Left cardiac atrium (tissue), 4 donors: ENCODE measurements at regions of chr15 and their contacts with region 1.

Region 1: GRCh38 chr15:78108299-78109084 is 16.1 kb downstream of the SH2D7 start:
- DNase-seq: peak; percentile 88
- ATAC-seq: peak; percentile 87 to 89

Region 2: DNA sequence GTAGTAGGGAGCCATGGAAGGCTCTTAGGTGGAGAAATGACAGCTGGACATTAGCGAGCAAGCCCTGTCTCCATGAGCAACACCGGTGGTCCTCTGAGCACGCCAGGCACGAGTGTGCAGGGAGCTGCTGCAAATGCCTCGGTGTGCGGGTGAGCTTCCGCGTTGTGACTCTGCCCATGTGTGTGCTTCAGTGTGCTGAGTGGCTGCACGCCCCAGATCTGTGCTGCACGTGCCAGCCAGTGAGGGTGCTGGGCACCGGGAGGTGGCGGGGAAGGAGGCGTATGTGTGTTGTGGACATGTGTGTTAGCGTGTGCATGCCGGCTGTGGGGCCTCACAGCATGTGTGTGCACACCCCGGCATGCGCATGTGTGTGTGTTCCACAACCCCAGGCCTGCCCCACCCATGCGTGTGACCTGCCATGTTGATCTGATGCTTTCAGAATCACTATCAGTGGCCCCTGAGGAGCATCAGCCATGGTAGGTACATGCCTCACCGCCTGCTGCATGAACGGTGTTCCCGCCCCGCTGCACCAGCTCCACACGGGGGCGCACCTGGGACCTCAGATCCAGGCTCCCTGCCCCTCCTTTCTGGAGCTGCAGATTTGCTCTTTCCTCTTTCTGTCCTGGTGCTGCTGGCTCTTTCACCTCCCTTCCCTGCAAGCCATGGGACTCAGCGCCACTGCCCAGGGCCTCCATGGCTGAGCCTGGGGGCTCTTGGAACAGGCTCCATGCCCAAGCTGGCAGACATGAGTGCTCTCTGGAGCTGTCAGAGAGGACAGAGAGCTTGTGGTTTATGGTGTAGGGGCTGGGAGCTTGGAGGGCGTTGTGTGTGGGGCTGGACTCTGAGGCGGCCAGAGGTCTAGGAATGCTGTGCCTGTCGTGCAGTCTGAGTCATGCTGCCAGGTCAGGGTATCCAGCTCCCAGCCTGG is 200.4 kb before region 1 on chr15:
- intact Hi-C with region 1: no loop called
- DNase-seq: no peak
- ATAC-seq: peak; percentile 19 to 28

Region 3: DNA sequence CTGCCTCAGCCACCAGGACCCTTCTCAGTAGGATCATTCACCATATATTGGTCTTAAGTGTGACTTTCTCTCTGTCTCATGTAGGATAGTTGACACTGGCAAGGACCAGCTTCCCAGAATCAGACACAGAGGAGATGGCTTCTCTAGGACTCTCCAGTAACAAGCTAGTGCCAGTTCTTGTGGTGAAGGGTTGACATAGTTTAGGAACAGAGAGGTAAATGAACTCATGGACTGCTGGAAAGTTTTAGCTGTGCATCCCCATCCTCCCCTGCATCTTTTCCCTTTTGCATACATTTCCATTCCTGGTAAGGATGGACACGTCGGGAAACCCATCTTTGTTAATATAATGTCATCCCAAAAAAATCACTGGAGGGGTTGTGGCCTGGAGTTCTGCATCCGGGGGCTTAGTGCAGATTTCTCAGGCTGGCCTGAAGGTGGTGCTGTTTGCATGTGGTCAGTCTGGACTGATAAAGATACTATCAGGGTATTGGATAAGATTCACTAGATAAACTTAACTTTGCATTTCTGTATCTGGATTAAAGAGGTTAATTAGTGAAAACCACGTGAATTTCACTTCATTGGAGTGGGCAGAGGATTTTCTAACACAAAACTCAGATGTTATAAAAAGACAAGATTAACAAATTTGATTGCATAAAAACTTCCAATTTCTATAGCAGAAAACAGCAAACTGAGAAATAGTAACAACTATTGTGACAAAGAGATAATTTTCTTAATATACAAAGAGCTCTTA is 141.8 kb before region 1 on chr15:
- intact Hi-C with region 1: loop called in 1 of 2 experiments (anchors 5 kb)
- DNase-seq: no peak
- ATAC-seq: peak; percentile 80 to 81

Region 4: DNA sequence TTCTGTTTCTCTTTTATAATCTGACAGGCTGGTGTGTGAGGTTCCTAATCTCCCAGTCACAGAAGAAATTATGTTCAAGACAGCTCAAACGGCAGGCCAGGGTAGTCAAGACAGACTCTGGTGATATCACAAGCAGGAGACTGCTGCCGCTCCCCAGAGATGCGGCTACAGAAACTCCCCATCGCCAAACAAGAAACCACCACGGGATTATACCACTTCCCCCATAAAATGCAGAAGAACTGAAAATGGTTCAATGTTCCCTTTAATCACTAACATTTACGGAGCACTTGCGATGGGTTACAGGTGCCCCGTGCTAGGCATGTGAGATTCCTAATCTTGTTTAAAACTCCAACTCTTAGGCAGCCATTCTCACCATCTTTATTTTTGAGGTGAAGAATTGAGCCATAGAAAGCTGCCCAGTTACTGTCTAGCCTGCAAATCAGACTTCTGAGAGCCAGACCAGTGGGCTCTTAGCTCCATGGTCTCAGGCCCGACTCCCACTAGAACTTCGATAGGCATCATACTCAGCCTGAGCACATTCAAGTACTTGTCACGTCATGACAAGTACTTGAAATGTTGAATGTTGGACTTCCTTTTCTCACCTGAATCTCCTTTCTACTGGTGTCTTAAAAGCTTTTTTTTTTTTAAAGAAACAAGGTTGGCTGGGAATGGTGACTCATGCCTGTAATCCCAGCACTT is 89.4 kb before region 1 on chr15:
- intact Hi-C with region 1: loop called in 1 of 2 experiments (anchors 5 kb)
- DNase-seq: no peak
- ATAC-seq: peak in 1 of 2 donors; percentile 36

Region 5: DNA sequence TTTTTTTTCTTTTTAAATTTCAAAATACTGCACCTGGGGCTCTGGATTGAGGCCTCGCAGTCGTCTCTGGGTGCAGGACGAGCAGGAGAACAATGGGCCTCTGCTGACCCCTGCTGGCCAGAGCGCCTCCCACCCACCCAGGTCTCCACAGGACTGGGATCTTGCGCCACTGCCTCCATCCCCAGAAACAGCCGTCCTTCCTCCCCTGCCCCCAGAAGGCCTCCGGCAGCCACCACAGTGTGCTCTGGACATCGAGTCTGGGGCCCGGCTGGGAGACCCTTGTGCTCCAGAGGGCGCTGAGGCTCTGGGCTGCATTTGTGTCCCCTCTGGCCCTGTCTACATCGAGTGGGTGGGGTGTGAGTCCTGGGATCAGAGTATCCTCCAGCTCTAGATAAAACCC is 132.5 kb after region 1 on chr15:
- intact Hi-C with region 1: loop called (anchors 2 to 5 kb)
- DNase-seq: peak; percentile 85
- ATAC-seq: peak; percentile 94 to 97